ENCODE measurements at regions of chr7 and their contacts with region 1.

Region 1: GRCh38 chr7:25125137-25125946 is at the start of gene CYCS:
- DNase-seq: peak; percentile 98
- ATAC-seq: peak; percentile 91
- H3K4me3 Mint-ChIP-seq: peak within 1 kb of the TSS; percentile 99
- H3K27ac Mint-ChIP-seq: peak within 1 kb of the TSS; percentile 99
- H3K4me1 Mint-ChIP-seq: peaks cover 31% of the 10 kb centered on the region
- H3K27me3 Mint-ChIP-seq: peaks cover 1% of the 10 kb centered on the region
- CTCF ChIP-seq: no peak
- total RNA-seq, gene CYCS: 73.0 and 85.0 TPM in 2 replicates

Region 2: GRCh38 chr7:23298885-23299769 is 1826.2 kb before region 1 on chr7 and contains the start of gene MALSU1:
- CTCF ChIA-PET with region 1: no interaction called
- POLR2A ChIA-PET with region 1: no interaction called
- intact Hi-C with region 1: loop called (anchors 10 kb)
- DNase-seq: peak; percentile 95
- ATAC-seq: peak; percentile 99
- H3K4me3 Mint-ChIP-seq: peak within 1 kb of the TSS; percentile 89
- H3K27ac Mint-ChIP-seq: peak within 1 kb of the TSS; percentile 95
- H3K4me1 Mint-ChIP-seq: peaks cover 39% of the 10 kb centered on the region
- H3K27me3 Mint-ChIP-seq: peaks cover 4% of the 10 kb centered on the region
- CTCF ChIP-seq: no peak
- total RNA-seq, gene MALSU1: 42.0 and 42.6 TPM in 2 replicates

Region 3: GRCh38 chr7:24715661-24716479 is 409.5 kb before region 1 on chr7:
- CTCF ChIA-PET with region 1: no interaction called
- POLR2A ChIA-PET with region 1: interaction called, 3 read pairs
- intact Hi-C with region 1: loop called (anchors 1 kb)
- DNase-seq: no peak
- ATAC-seq: no peak
- H3K4me3 Mint-ChIP-seq: peak overlapping the region; percentile 64
- H3K27ac Mint-ChIP-seq: peak overlapping the region; percentile 61
- H3K4me1 Mint-ChIP-seq: peaks cover 65% of the 10 kb centered on the region
- H3K27me3 Mint-ChIP-seq: no peaks in the 10 kb centered on the region
- CTCF ChIP-seq: no peak

Region 4: DNA sequence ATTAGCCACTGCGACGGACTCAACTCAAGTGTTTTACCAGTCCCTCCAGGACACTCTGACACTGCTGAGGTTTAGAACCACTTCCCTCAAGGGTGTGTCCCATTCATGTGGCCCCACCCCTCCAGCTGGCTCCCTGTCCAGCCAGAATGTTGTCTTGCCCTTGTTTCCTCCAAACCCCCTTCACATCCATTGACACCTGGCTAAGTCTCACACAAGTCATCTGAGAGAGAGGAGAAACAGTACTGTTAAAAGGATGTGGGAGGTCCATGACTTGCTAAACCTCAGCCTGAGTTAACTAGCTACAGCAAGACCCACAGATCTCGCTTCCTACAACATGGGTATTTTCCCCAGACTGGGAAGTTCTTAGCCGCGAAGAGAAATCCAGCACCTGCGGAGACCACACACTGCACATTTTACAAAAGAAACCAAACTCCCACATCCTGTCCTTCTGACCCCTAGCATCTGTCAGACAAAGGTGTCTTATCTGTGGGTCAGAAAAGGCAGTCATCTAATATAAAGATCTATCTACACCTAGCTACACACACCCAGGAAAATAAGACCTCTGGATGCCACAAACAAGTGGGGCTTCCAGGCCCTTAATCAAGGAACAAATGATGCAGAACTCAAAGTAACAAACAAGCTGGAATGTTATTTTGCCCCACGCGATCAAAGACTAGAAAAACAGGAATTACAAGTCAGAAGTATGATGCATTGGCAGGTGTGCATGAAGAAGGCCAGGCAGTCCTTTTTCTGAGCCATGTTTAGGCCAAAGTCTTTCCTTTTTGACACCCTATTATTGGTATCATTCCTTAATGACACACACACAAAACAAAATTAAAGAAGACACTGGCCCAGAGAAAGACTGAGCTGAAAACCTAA is 159.3 kb before region 1 on chr7:
- CTCF ChIA-PET with region 1: no interaction called
- POLR2A ChIA-PET with region 1: interaction called, 15 read pairs
- intact Hi-C with region 1: no loop called
- DNase-seq: no peak
- ATAC-seq: peak; percentile 57
- H3K4me3 Mint-ChIP-seq: peak overlapping the region; percentile 42
- H3K27ac Mint-ChIP-seq: peak overlapping the region; percentile 84
- H3K4me1 Mint-ChIP-seq: peaks cover 74% of the 10 kb centered on the region
- H3K27me3 Mint-ChIP-seq: no peaks in the 10 kb centered on the region
- CTCF ChIP-seq: no peak

Region 5: GRCh38 chr7:25158966-25159365 is 33.6 kb after region 1 on chr7:
- CTCF ChIA-PET with region 1: interaction called, 3 read pairs
- POLR2A ChIA-PET with region 1: no interaction called
- intact Hi-C with region 1: loop called (anchors 2 kb)
- DNase-seq: no peak
- ATAC-seq: no peak
- H3K4me3 Mint-ChIP-seq: no peak overlapping the region
- H3K27ac Mint-ChIP-seq: no peak overlapping the region
- H3K4me1 Mint-ChIP-seq: peaks cover 1% of the 10 kb centered on the region
- H3K27me3 Mint-ChIP-seq: no peaks in the 10 kb centered on the region
- CTCF ChIP-seq: no peak

Measured in activated B cell treated with CpG ODN at 0.5 μM for 24 hours (primary cell).